Psoas muscle (tissue), 8 donors: ENCODE measurements at regions of chr7 and their contacts with region 1.

Region 1: DNA sequence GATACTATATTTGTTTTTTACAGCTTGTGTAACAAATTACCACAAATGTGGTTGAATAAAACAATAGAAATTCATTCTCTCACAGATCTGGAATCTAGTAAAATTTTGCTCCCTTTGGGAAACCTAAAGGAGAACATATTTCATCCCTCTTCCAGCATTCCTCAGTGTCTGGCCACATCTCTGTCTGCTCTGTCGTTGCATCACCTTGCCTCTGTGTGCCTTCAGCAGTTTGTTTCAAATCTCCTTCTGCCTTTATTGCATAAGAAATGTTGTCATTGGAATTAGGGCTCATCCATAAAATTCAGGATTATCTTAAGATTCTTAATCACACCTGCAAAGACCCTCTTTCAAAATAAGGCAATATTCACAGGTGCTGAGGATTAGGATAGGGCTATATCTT is 14.5 kb downstream of the OR2A14 start:
- DNase-seq: no peak
- ATAC-seq: no peak
- H3K4me3 ChIP-seq: no peak overlapping the region
- H3K27ac ChIP-seq: no peak overlapping the region
- H3K4me1 ChIP-seq: no peaks in the 10 kb centered on the region
- H3K27me3 ChIP-seq: no peaks in the 10 kb centered on the region
- CTCF ChIP-seq: no peak

Region 2: DNA sequence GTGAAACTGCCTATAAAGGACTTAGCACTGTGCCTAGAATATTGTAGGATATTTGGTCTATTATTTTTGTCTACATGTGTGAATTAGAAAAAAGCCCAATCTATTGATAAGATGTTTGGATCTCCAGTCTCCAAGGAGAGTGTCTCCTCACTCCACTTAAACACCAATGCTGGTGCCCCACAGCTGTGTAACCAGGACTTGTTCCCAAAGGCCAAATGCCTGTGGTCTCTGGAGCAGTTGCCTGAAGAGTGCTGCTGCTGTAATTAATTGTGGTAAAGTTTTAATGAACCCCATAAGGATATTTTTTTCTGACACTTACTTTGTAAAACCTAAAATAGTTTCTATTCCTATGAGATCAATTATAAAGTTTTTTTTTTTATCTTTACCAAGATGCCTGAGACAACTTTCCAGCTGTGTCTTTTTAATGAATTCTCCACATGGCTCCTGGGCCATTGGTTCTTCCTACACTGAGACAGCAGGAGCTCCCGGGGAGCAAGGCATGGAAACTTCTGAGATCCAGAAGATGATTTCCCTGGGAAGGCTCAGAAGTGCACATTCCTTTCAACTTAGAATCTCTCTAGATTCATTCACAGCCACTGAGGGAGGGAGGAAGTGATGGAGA is 100.0 kb before region 1 on chr7:
- intact Hi-C with region 1: loop called in 1 of 2 experiments (anchors 10 kb)
- DNase-seq: no peak
- ATAC-seq: peak in 1 of 4 donors; percentile 49
- H3K4me3 ChIP-seq: no peak overlapping the region
- H3K27ac ChIP-seq: no peak overlapping the region
- H3K4me1 ChIP-seq: no peaks in the 10 kb centered on the region
- H3K27me3 ChIP-seq: no peaks in the 10 kb centered on the region
- CTCF ChIP-seq: no peak